Ascending aorta (tissue), 2 donors: ENCODE measurements at regions of chr18 and their contacts with region 1.

Region 1: GRCh38 chr18:51197661-51198424 is at the start of gene MEX3C:
- DNase-seq: peak; percentile 98 to 100
- H3K4me3 ChIP-seq: peak within 1 kb of the TSS; percentile 81 to 82
- H3K27ac ChIP-seq: peak within 1 kb of the TSS; percentile 97 to 98
- H3K4me1 ChIP-seq: peaks cover 0 to 19% of the 10 kb centered on the region in 2 donors
- H3K27me3 ChIP-seq: no peaks in the 10 kb centered on the region
- CTCF ChIP-seq: peak in 2 of 3 experiments; percentile 29
- total RNA-seq, gene MEX3C: 97.7 TPM

Region 2: DNA sequence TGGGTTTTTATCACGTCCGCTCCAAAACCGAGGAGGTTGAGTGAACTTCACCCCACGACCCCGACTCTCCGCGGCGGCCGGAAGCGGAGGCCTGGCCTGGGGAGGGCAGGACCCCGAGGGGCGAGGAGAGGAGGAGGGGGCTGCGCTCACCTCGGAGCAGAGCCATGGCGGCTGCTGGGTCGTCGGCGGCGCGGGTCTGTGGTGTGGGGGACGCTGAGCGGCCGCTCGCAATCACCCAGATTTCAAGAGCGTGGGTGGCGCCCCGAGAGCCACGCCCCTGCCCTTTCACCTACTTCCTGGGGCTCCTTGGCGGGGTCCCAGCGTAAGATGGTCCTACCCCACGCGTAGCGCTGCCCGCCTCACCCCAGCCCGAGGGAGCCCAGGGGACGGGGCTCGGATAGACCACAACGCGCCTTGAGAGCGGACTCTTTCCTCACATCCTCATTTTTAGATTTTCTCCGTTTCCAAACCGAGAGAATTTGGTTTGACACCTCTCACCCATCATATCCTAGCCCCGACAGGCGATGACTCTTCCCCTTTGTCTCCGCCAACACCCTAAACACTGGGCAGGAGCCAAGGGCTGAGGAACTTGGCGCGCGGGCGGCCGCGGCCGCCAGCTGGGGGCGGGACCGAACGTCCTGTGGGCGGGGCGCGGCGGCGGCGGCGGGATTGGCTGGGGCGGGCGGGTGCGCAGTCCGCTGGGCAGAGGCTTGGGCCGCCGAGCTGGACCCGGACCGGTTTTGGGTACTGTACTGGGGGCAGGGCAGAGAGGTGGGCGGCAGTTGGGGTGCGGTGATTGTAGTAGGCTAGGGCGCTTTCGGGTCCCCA is 1384.3 kb before region 1 on chr18 and contains the start of gene ACAA2:
- intact Hi-C with region 1: loop called (anchors 10 kb)
- DNase-seq: peak; percentile 51 to 92
- H3K4me3 ChIP-seq: peak within 1 kb of the TSS; percentile 79
- H3K27ac ChIP-seq: peak within 1 kb of the TSS; percentile 94 to 98
- H3K4me1 ChIP-seq: peaks cover 7 to 10% of the 10 kb centered on the region in 2 donors
- H3K27me3 ChIP-seq: no peaks in the 10 kb centered on the region
- CTCF ChIP-seq: no peak
- total RNA-seq, gene ACAA2: 33.4 TPM

Region 3: GRCh38 chr18:50649821-50650220 is 548.0 kb before region 1 on chr18:
- intact Hi-C with region 1: loop called (anchors 5 kb)
- DNase-seq: peak; percentile 22 to 90
- H3K4me3 ChIP-seq: no peak overlapping the region
- H3K27ac ChIP-seq: peak overlapping the region; percentile 83 to 84
- H3K4me1 ChIP-seq: peaks cover 20 to 35% of the 10 kb centered on the region in 2 donors
- H3K27me3 ChIP-seq: no peaks in the 10 kb centered on the region
- CTCF ChIP-seq: no peak

Region 4: DNA sequence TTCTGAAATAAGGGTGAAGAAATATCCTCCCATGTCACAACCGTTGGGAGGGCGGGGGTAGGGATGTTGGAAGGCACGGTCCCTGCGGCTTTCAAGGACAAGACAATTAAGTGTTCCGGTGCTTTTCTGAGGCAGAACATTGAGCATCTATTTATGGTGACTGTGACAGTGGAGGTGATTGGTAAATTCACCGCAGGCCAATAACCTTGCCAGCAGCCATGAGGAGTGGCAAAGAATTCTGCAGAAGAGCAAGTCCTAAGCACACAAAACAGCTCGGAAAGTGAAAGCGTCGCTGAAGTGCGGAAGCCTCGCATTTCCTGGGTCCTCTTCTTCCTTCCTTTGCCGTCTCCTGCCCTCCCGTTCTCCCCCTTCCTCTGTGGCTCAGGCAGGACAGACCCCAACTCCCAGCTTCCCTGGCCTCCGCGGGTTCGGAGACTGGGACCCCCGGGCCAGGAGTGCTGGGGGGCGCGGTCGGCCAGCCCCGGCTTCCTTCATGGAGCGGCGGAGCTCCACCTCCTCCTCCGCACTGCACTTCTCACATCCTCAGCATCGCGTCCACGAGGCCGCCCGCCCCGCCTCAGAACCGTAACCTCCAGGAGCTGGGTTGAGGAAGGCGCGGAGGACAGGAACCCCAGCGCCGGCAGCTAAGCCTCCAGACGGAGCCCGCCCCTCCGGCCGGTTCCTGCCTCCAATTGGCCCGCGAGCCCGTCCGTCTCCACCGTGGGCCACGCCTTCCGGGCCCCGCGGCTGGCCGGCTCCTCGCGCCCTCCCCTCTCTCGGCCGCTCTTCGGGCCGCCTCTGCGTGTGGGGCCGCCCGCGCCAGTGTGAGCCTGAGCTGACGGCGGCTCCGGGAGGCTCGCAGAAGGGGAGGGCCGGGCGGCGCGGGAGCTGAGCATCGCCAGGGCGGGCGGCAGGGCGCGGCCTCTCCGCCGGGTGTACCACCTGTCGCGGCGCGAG is 319.2 kb before region 1 on chr18 and contains the start of gene ME2:
- intact Hi-C with region 1: loop called (anchors 2 kb)
- DNase-seq: peak; percentile 68 to 95
- H3K4me3 ChIP-seq: peak within 1 kb of the TSS; percentile 88 to 92
- H3K27ac ChIP-seq: peak within 1 kb of the TSS; percentile 87 to 92
- H3K4me1 ChIP-seq: peaks cover 6% of the 10 kb centered on the region in 2 donors
- H3K27me3 ChIP-seq: no peaks in the 10 kb centered on the region
- CTCF ChIP-seq: no peak
- total RNA-seq, gene ME2: 27.4 TPM

Region 5: DNA sequence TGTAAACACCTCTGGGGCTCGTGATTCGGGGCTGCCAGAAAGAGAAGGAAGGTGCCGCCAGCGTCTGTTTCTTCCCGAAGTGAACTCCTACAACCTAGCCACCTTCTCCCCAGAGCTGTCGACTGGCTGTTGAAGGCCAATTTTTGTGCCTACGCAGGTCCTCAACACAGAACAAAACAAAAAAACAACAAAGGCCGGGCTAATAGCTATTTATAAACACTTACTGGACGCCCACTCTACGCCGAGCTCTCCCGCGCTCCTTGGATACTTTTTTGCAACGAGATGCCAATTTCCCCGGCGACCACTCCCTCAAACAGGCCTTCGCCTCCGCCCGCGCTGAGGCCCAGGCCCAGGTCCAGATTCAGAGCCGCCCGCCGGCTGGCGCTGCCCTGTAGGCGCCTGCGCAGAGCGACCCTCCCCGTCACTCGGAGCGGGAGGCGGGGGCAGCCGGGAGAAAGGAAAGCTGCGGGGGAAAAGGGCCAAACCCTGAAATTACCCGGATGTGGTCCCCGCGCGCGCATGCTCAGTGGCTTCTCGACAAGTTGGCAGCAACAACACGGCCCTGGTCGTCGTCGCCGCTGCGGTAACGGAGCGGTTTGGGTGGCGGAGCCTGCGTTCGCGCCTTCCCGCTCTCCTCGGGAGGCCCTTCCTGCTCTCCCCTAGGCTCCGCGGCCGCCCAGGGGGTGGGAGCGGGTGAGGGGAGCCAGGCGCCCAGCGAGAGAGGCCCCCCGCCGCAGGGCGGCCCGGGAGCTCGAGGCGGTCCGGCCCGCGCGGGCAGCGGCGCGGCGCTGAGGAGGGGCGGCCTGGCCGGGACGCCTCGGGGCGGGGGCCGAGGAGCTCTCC is 167.9 kb before region 1 on chr18 and contains the start of gene SMAD4:
- intact Hi-C with region 1: loop called (anchors 1 kb)
- DNase-seq: peak; percentile 79 to 98
- H3K4me3 ChIP-seq: peak within 1 kb of the TSS; percentile 91 to 95
- H3K27ac ChIP-seq: peak within 1 kb of the TSS; percentile 92 to 99
- H3K4me1 ChIP-seq: peaks cover 3 to 34% of the 10 kb centered on the region in 2 donors
- H3K27me3 ChIP-seq: no peaks in the 10 kb centered on the region
- CTCF ChIP-seq: no peak
- total RNA-seq, gene SMAD4: 196 TPM

Region 6: GRCh38 chr18:51248685-51249084 is 50.8 kb after region 1 on chr18:
- intact Hi-C with region 1: no loop called
- DNase-seq: no peak
- H3K4me3 ChIP-seq: no peak overlapping the region
- H3K27ac ChIP-seq: no peak overlapping the region
- H3K4me1 ChIP-seq: no peaks in the 10 kb centered on the region
- H3K27me3 ChIP-seq: no peaks in the 10 kb centered on the region
- CTCF ChIP-seq: no peak